Naive thymus-derived CD4-positive, alpha-beta T cell (primary cell): ENCODE measurements at regions of chr6 and their contacts with region 1.

Region 1: GRCh38 chr6:44976719-44977641 is 351.1 kb upstream of the RUNX2 start:
- DNase-seq: peak in 7 of 9 donors; percentile 57 to 84 (median 73)
- ATAC-seq: peak; percentile 93
- H3K4me3 ChIP-seq: no peak overlapping the region
- H3K4me3 Mint-ChIP-seq: peak overlapping the region; percentile 23 to 74 (median 58)
- H3K27ac ChIP-seq: peak overlapping the region; percentile 18
- H3K27ac Mint-ChIP-seq: peak overlapping the region; percentile 20 to 88 (median 80)
- H3K4me1 ChIP-seq: peaks cover 6 to 23% of the 10 kb centered on the region in 2 donors
- H3K4me1 Mint-ChIP-seq: peaks cover 8 to 76% (median 47%) of the 10 kb centered on the region in 7 donors
- H3K27me3 ChIP-seq: no peaks in the 10 kb centered on the region
- H3K27me3 Mint-ChIP-seq: no peaks in the 10 kb centered on the region

Region 2: DNA sequence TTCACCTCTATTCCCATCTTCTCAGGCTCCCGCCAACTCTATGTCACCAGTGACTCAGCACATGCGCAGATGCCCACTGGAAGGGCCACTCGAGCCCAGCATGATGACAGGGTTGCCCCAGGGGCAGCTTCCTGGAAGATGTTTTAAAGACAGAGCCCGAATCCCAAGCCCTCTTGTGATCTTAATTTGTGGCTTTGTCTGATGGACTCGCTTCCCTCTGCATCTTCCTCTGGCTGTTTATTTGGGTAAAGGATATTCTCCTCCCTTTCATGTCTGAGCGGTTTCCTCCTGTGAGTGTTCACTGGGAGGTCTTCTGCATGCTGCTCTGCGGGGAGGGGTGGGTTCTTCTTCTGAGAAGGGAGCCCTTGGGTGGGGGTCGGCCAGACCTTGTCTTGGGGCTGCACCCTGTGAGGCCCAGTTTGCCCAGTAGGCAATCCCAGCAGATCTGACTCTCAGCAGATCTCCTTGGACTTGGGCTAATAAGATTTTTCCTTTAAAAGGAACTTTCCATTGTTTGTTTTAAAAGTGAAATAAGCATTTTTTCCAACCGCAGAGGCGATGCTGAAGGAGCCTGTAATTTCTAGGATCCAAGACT is 188.5 kb before region 1 on chr6:
- CTCF ChIA-PET with region 1: no interaction called
- POLR2A ChIA-PET with region 1: no interaction called
- intact Hi-C with region 1: loop called in 1 of 2 experiments (anchors 10 kb)
- DNase-seq: no peak
- ATAC-seq: no peak
- H3K4me3 ChIP-seq: no peak overlapping the region
- H3K4me3 Mint-ChIP-seq: peak overlapping the region in 8 of 10 donors; percentile 8 to 79 (median 32)
- H3K27ac ChIP-seq: no peak overlapping the region
- H3K27ac Mint-ChIP-seq: peak overlapping the region in 3 of 9 donors; percentile 32 to 38 (median 33)
- H3K4me1 ChIP-seq: peaks cover 0 to 14% of the 10 kb centered on the region in 2 donors
- H3K4me1 Mint-ChIP-seq: peaks cover 13 to 27% (median 20%) of the 10 kb centered on the region in 7 donors
- H3K27me3 ChIP-seq: no peaks in the 10 kb centered on the region
- H3K27me3 Mint-ChIP-seq: peaks cover 0 to 13% (median 11%) of the 10 kb centered on the region in 5 donors

Region 3: GRCh38 chr6:44925100-44925739 is 51.8 kb before region 1 on chr6:
- CTCF ChIA-PET with region 1: interaction called, 3 read pairs
- POLR2A ChIA-PET with region 1: no interaction called
- intact Hi-C with region 1: loop called in 1 of 2 experiments (anchors 1 kb)
- DNase-seq: peak in 7 of 9 donors; percentile 33 to 82 (median 64)
- ATAC-seq: peak; percentile 95
- H3K4me3 ChIP-seq: peak overlapping the region; percentile 22
- H3K4me3 Mint-ChIP-seq: peak overlapping the region in 9 of 10 donors; percentile 5 to 60 (median 43)
- H3K27ac ChIP-seq: peak overlapping the region; percentile 67
- H3K27ac Mint-ChIP-seq: peak overlapping the region; percentile 22 to 80 (median 51)
- H3K4me1 ChIP-seq: peaks cover 19 to 35% of the 10 kb centered on the region in 2 donors
- H3K4me1 Mint-ChIP-seq: peaks cover 25 to 63% (median 51%) of the 10 kb centered on the region in 7 donors
- H3K27me3 ChIP-seq: no peaks in the 10 kb centered on the region
- H3K27me3 Mint-ChIP-seq: no peaks in the 10 kb centered on the region

Region 4: GRCh38 chr6:44989391-44989790 is 12.4 kb after region 1 on chr6:
- CTCF ChIA-PET with region 1: no interaction called
- POLR2A ChIA-PET with region 1: no interaction called
- intact Hi-C with region 1: loop called in 1 of 2 experiments (anchors 2 kb)
- DNase-seq: no peak
- ATAC-seq: no peak
- H3K4me3 ChIP-seq: no peak overlapping the region
- H3K4me3 Mint-ChIP-seq: no peak overlapping the region
- H3K27ac ChIP-seq: no peak overlapping the region
- H3K27ac Mint-ChIP-seq: no peak overlapping the region
- H3K4me1 ChIP-seq: no peaks in the 10 kb centered on the region
- H3K4me1 Mint-ChIP-seq: peaks cover 2 to 34% (median 17%) of the 10 kb centered on the region in 7 donors
- H3K27me3 ChIP-seq: no peaks in the 10 kb centered on the region
- H3K27me3 Mint-ChIP-seq: no peaks in the 10 kb centered on the region

Region 5: DNA sequence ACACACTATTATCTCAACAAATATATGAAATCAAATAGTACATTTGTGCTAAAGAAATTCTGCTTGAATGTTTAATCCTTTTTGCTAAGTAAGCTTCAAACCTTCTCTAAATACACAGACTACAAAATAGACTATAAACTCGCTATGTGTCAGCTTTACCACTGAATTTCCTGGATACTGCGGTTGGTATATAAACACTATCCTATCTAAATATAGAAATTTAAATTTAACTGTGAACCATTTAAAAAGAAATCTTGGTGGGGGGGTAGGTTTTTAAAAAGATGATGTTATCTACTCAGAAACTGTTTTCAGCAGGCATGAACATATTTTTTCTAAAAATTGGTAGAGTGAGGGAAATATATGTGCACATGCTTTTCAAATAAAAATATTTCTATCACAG is 44.7 kb after region 1 on chr6:
- CTCF ChIA-PET with region 1: no interaction called
- POLR2A ChIA-PET with region 1: interaction called, 3 read pairs
- intact Hi-C with region 1: loop called in 1 of 2 experiments (anchors 5 kb)
- DNase-seq: peak in 7 of 9 donors; percentile 6 to 55 (median 28)
- ATAC-seq: peak; percentile 67
- H3K4me3 ChIP-seq: no peak overlapping the region
- H3K4me3 Mint-ChIP-seq: peak overlapping the region in 2 of 10 donors; percentile 6 to 7
- H3K27ac ChIP-seq: no peak overlapping the region
- H3K27ac Mint-ChIP-seq: peak overlapping the region in 2 of 9 donors; percentile 23 to 34
- H3K4me1 ChIP-seq: peaks cover 0 to 4% of the 10 kb centered on the region in 2 donors
- H3K4me1 Mint-ChIP-seq: peaks cover 9 to 20% (median 19%) of the 10 kb centered on the region in 7 donors
- H3K27me3 ChIP-seq: no peaks in the 10 kb centered on the region
- H3K27me3 Mint-ChIP-seq: no peaks in the 10 kb centered on the region

Region 6: GRCh38 chr6:45310118-45310788 is 333.3 kb after region 1 on chr6:
- CTCF ChIA-PET with region 1: no interaction called
- POLR2A ChIA-PET with region 1: no interaction called
- intact Hi-C with region 1: loop called in 1 of 2 experiments (anchors 5 kb)
- DNase-seq: peak in 8 of 9 donors; percentile 24 to 71 (median 60)
- ATAC-seq: peak; percentile 76
- H3K4me3 ChIP-seq: peak overlapping the region; percentile 32
- H3K4me3 Mint-ChIP-seq: peak overlapping the region; percentile 63 to 84 (median 80)
- H3K27ac ChIP-seq: peak overlapping the region; percentile 44
- H3K27ac Mint-ChIP-seq: peak overlapping the region; percentile 85 to 95 (median 90)
- H3K4me1 ChIP-seq: peaks cover 14 to 33% of the 10 kb centered on the region in 2 donors
- H3K4me1 Mint-ChIP-seq: peaks cover 39 to 86% (median 78%) of the 10 kb centered on the region in 7 donors
- H3K27me3 ChIP-seq: no peaks in the 10 kb centered on the region
- H3K27me3 Mint-ChIP-seq: no peaks in the 10 kb centered on the region